Activated T-helper 1 cell treated with anti-CD3 and anti-CD28 coated beads, Interleukin-12 subunit alpha, Interleukin-12 subunit beta, Interleukin-2, Interleukin-4 antibody, amounts not matched to agents 30 ng/mL and 10 ng/mL and 1 ng/mL, durations not matched to agents 14 hours and 24 hours and 36 hours (primary cell): ENCODE measurements at regions of chr1 and their contacts with region 1.

Region 1: DNA sequence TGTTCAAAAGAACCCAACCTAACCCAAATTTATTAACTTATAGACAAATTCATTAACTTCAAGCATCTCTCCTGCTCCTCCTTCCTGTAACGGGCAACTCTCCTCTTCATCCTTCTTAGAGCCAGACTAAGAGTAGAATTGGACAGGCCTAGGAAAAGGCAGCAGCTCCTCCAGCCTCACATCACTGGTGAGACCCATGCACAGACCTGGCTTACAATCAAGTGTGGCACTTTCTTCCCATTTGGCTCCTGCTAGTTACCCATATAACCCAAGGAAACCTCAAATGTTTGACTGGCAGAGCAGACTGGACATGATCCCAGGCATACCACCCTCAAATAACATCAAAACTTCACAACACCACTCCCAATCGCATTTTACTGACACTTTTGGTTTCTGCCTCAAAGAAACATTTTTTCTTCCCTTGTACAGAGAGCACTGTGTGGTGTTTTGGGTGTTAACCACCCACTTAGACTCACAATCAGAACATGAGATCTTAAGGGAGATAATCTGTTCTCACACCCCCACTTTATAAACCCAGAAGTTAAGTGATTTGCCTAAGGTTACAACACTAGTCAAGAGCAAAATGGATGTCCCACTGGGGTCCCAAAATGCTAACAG is 101.4 kb downstream of the SIPA1L2 start:
- DNase-seq: no peak
- H3K4me3 Mint-ChIP-seq: peak overlapping the region; percentile 28
- H3K27ac Mint-ChIP-seq: peak overlapping the region; percentile 14
- H3K4me1 Mint-ChIP-seq: peaks cover 17% of the 10 kb centered on the region
- H3K27me3 Mint-ChIP-seq: peaks cover 21% of the 10 kb centered on the region

Region 2: GRCh38 chr1:232403017-232403714 is 125.4 kb before region 1 on chr1:
- intact Hi-C with region 1: no loop called
- DNase-seq: no peak
- H3K4me3 Mint-ChIP-seq: no peak overlapping the region
- H3K27ac Mint-ChIP-seq: no peak overlapping the region
- H3K4me1 Mint-ChIP-seq: peaks cover 7% of the 10 kb centered on the region
- H3K27me3 Mint-ChIP-seq: no peaks in the 10 kb centered on the region

Region 3: GRCh38 chr1:232457595-232457994 is 71.0 kb before region 1 on chr1:
- intact Hi-C with region 1: loop called (anchors 5 kb)
- DNase-seq: peak; percentile 11
- H3K4me3 Mint-ChIP-seq: no peak overlapping the region
- H3K27ac Mint-ChIP-seq: no peak overlapping the region
- H3K4me1 Mint-ChIP-seq: peaks cover 16% of the 10 kb centered on the region
- H3K27me3 Mint-ChIP-seq: no peaks in the 10 kb centered on the region

Region 4: DNA sequence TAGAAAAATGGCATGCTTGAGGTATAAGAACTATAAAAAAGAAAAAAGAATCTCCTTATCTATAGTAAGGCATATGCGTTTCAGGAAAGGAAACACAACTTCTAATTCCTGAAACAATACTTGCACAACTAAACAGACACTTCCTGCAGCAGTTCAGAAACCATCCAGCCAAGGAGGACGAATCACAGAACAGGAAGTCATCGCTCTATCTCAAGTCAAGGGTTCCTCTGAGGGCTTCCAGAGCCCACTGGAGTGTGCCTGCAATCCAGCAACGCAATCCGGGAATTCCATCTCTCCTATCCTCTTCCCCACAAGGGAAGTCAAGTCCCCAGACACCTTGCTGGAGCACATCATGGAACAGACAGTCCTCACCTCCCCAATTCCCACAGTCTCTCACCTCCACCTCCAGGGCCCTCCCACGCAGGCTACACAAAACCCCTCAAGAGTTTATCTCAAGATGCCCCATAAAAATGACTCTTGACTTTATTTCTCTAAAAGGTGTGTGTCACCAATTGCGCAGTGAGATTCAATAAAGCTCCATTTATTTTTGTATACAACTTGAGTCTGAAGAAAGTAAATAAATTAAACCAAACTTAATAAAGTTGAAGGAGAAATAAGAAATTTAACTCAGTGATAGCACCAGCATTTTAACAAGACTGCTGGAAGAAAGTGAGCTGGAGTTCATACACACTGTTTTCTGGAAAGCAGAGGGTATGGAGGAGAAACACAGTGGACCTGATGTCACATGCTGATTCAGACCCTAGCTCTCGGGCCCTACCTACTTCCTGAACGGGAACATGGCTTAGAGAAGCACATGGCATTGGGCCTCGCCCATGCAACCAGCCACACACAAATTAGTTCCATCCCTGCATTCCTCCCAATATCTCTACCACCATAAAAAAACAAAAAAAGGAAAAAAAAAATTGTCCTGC is 61.5 kb after region 1 on chr1:
- intact Hi-C with region 1: loop called (anchors 2 kb)
- DNase-seq: no peak
- H3K4me3 Mint-ChIP-seq: no peak overlapping the region
- H3K27ac Mint-ChIP-seq: peak overlapping the region; percentile 27
- H3K4me1 Mint-ChIP-seq: peaks cover 54% of the 10 kb centered on the region
- H3K27me3 Mint-ChIP-seq: no peaks in the 10 kb centered on the region